ENCODE measurements at regions of chr14 and their contacts with region 1.

Region 1: DNA sequence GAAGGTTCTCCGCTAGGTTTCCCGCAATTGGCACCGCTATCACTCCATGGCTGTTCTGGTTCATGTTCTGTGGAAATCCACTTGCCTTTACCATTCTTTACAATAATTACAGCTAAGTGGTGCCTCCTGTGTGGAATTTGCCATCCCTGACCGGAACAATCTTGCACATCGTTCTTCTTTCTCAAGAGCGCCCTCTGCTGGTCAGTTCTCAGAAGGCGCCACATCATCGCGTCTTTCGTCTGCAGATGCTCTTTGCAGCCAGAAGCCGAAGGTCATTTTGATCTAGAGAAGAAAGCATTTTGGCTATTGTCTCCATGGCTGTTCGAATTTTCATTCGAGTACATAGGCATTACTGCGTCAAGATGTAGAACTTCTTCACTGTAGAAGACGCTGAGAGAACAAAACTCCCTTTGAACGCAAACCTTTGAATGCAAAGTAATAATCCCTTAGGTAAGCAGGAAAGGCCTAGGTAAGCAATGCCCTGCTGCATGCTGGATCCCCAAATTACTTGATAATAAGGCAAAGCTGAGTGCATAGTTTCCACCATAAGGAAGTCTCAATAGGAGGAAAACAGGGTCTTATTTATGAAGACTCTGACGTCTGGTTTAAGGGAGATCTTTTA is 10.1 kb upstream of the RTRAF start:
- DNase-seq: peak; percentile 78 to 92 (median 89)
- ATAC-seq: peak; percentile 75 to 82
- H3K4me3 ChIP-seq: no peak overlapping the region
- H3K27ac ChIP-seq: peak overlapping the region; percentile 49
- H3K4me1 ChIP-seq: no peaks in the 10 kb centered on the region
- H3K27me3 ChIP-seq: no peaks in the 10 kb centered on the region

Region 2: GRCh38 chr14:51807356-51807755 is 171.8 kb before region 1 on chr14:
- intact Hi-C with region 1: loop called in 1 of 4 experiments (anchors 10 kb)
- DNase-seq: peak in 1 of 3 donors; percentile 41
- ATAC-seq: no peak
- H3K4me3 ChIP-seq: no peak overlapping the region
- H3K27ac ChIP-seq: no peak overlapping the region
- H3K4me1 ChIP-seq: no peaks in the 10 kb centered on the region
- H3K27me3 ChIP-seq: no peaks in the 10 kb centered on the region

Region 3: DNA sequence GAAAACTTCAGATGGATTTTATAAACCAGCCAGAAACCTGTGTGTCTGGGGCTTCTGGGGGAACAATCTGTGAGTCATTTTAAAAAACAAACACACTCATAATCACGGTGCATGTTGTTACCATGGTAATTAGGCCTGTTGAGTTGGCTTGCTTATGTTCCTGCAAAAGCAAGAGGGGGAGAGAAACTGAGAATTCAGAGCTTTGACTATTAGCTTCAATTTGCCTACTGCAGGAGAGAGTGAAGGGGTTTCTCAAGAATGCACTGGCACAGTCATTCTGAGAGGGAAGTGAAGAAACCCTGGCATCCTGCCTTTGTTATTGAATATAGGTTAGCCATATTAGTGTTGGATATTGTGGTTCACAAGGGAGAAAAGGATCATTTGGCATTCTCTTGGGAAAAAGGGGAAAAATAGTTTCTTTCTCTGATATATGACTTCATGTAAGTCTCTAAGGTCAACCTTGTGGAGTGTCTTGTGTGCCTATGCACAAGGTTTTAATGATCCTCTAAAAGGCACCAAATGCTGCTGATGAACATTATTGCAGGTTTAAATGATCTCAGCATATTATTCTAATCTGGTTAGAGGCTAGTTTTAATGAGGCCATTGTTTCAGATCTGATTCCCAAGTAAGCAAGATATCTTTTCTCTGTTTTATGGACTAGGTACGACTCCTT is 105.8 kb before region 1 on chr14:
- intact Hi-C with region 1: loop called in 1 of 4 experiments (anchors 10 kb)
- DNase-seq: no peak
- ATAC-seq: peak; percentile 55 to 58
- H3K4me3 ChIP-seq: no peak overlapping the region
- H3K27ac ChIP-seq: no peak overlapping the region
- H3K4me1 ChIP-seq: no peaks in the 10 kb centered on the region
- H3K27me3 ChIP-seq: no peaks in the 10 kb centered on the region

Region 4: DNA sequence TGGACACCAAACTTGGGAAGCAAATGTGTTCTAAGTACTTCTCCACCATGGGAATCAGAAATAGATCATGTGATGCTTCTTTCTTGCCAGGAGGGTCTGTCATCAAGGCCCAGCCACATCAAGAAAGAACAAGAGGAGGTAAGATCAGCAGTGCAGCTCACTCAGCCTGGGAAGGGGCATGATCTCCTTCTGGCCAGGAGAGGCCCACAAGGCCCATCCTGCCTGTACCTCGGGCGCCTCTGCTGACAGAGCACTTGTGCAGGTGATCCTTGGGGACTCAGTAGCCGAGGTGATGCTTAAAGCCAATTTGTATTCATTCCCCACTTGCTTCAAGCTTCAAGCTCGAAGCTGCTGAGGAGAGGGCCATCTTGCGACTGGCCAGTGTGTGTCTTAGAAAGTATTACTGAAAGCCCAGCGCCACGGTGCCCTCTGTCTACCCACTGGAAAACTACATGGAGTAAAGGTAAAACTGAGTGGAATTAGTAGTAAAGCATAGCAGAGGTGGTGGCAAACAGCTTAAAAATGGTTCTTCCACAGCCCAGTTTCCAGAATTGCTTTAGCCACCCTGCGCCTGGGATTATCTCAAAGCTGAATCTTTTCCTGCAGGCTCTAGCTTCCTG is 36.3 kb after region 1 on chr14:
- intact Hi-C with region 1: no loop called
- DNase-seq: peak in 1 of 3 donors; percentile 65
- ATAC-seq: peak in 1 of 2 donors; percentile 17
- H3K4me3 ChIP-seq: no peak overlapping the region
- H3K27ac ChIP-seq: peak overlapping the region; percentile 65
- H3K4me1 ChIP-seq: peaks cover 25% of the 10 kb centered on the region
- H3K27me3 ChIP-seq: no peaks in the 10 kb centered on the region

Region 5: GRCh38 chr14:52117111-52117832 is 138.1 kb after region 1 on chr14:
- intact Hi-C with region 1: no loop called
- DNase-seq: peak in 1 of 3 donors; percentile 66
- ATAC-seq: no peak
- H3K4me3 ChIP-seq: no peak overlapping the region
- H3K27ac ChIP-seq: no peak overlapping the region
- H3K4me1 ChIP-seq: no peaks in the 10 kb centered on the region
- H3K27me3 ChIP-seq: no peaks in the 10 kb centered on the region